CD4-positive, alpha-beta T cell (primary cell): ENCODE measurements at regions of chr3 and their contacts with region 1.

Region 1: GRCh38 chr3:119293871-119294695 is at the start of gene ARHGAP31:
- DNase-seq: peak; percentile 60 to 96 (median 78)
- ATAC-seq: peak; percentile 68
- H3K4me3 ChIP-seq: peak within 1 kb of the TSS; percentile 84
- H3K4me3 Mint-ChIP-seq: peak within 1 kb of the TSS; percentile 84
- H3K27ac ChIP-seq: peak within 1 kb of the TSS; percentile 95 to 96
- H3K27ac Mint-ChIP-seq: peak within 1 kb of the TSS; percentile 100
- H3K4me1 ChIP-seq: peaks cover 65% of the 10 kb centered on the region
- H3K4me1 Mint-ChIP-seq: peaks cover 74% of the 10 kb centered on the region
- H3K27me3 ChIP-seq: no peaks in the 10 kb centered on the region
- H3K27me3 Mint-ChIP-seq: no peaks in the 10 kb centered on the region
- CTCF ChIP-seq: no peak
- total RNA-seq, gene ARHGAP31: 2.4 to 2.9 TPM

Region 2: DNA sequence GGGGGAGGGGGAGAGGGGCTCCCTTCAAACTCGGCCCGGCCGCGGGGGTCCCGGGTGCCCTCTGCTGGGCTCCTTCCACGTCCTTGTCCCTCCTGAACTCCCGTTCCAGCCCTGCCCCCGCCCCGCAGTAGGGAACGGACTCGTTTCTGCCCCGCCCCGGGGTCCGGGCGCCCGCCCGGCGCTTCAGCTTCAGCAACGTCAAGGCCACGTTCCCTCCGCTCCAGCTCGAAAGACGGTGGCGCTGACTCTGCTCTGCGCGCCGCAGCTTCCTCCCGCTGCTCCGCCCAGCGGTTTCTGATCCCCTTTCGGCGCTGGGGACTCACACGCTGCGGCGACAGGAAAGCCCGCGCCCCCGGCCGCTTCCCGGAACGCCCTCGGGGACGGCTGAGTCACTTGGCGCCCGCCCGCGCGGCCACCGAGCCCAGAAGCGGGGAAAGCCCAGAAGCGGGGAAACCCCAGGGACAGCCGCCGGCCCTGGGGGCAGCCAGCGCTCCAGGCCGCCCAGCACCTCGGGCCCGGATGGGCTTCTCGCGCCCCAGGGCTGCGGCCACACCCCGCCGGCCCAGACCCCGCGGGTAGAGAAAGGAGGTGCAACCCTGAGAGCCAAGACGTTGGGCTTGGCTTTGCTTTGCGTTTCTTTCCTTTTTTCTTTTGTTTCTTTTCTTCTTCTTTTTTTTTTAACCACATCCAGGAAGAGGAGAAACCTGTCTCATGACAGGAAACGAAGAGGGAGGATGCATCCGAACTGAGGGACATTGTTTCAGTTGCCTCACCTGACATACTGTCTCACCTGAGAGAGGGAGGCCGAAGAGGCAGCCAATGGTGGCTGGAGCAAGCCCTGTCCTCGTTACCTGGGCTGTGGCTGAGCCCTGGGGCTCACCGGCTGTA is 29.0 kb after region 1 on chr3:
- CTCF ChIA-PET with region 1: interaction called, 3 read pairs
- POLR2A ChIA-PET with region 1: interaction called, 68 read pairs
- intact Hi-C with region 1: loop called (anchors 1 to 2 kb)
- DNase-seq: peak; percentile 70 to 97 (median 84)
- ATAC-seq: peak; percentile 86
- H3K4me3 ChIP-seq: peak overlapping the region; percentile 79
- H3K4me3 Mint-ChIP-seq: peak overlapping the region; percentile 89
- H3K27ac ChIP-seq: peak overlapping the region; percentile 81 to 90
- H3K27ac Mint-ChIP-seq: peak overlapping the region; percentile 96
- H3K4me1 ChIP-seq: peaks cover 23% of the 10 kb centered on the region
- H3K4me1 Mint-ChIP-seq: peaks cover 32% of the 10 kb centered on the region
- H3K27me3 ChIP-seq: no peaks in the 10 kb centered on the region
- H3K27me3 Mint-ChIP-seq: no peaks in the 10 kb centered on the region
- CTCF ChIP-seq: no peak

Region 3: GRCh38 chr3:119338754-119339153 is 44.7 kb after region 1 on chr3:
- CTCF ChIA-PET with region 1: no interaction called
- POLR2A ChIA-PET with region 1: interaction called, 4 read pairs
- intact Hi-C with region 1: loop called in 1 of 2 experiments (anchors 5 kb)
- DNase-seq: no peak
- ATAC-seq: no peak
- H3K4me3 ChIP-seq: no peak overlapping the region
- H3K4me3 Mint-ChIP-seq: no peak overlapping the region
- H3K27ac ChIP-seq: no peak overlapping the region
- H3K27ac Mint-ChIP-seq: no peak overlapping the region
- H3K4me1 ChIP-seq: no peaks in the 10 kb centered on the region
- H3K4me1 Mint-ChIP-seq: no peaks in the 10 kb centered on the region
- H3K27me3 ChIP-seq: no peaks in the 10 kb centered on the region
- H3K27me3 Mint-ChIP-seq: no peaks in the 10 kb centered on the region
- CTCF ChIP-seq: no peak

Region 4: DNA sequence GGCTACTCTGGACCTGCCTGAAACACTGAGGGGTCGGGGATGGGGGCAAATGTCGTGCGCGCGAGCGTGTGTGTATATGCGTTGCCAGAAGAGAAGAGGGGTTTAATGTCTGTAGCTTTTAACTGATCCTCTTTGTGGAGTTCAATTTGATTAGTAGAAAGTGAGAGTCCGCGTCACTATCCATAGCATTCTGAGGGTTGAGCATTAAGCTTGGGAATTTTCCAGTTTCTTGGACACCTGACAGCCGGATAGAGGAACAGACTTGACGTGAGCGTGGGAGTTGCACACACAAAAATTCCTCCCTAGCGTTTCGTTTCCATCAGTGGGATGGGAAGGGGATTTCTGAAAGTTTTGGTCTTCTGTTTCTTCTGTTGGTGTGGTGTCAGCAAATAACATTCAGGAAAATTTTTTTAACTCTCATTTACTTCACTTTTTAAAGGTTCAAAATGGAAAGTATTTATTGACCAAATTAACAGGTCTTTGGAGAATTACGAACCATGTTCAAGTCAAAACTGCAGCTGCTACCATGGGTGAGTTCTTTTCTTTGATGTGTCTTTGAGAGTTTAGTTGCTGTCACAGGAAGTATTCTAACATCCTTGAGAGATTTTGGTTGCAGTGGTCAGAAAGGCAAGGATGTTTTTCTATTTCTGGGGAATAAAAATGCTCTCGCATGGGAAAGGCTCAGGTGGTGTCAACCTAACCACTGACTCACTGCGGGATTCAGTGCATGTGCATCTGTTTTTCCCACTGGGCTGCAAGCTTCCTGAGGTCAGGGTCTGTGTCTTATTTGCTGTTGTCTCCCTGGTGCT is 175.5 kb after region 1 on chr3:
- CTCF ChIA-PET with region 1: interaction called, 3 read pairs
- POLR2A ChIA-PET with region 1: interaction called, 31 read pairs
- intact Hi-C with region 1: loop called (anchors 5 to 10 kb)
- DNase-seq: peak in 3 of 14 experiments; percentile 21 to 32 (median 27)
- ATAC-seq: peak; percentile 20
- H3K4me3 ChIP-seq: peak overlapping the region; percentile 86
- H3K4me3 Mint-ChIP-seq: peak overlapping the region; percentile 98
- H3K27ac ChIP-seq: peak overlapping the region; percentile 37 to 81
- H3K27ac Mint-ChIP-seq: peak overlapping the region; percentile 90
- H3K4me1 ChIP-seq: peaks cover 28% of the 10 kb centered on the region
- H3K4me1 Mint-ChIP-seq: peaks cover 29% of the 10 kb centered on the region
- H3K27me3 ChIP-seq: no peaks in the 10 kb centered on the region
- H3K27me3 Mint-ChIP-seq: no peaks in the 10 kb centered on the region
- CTCF ChIP-seq: no peak

Region 5: DNA sequence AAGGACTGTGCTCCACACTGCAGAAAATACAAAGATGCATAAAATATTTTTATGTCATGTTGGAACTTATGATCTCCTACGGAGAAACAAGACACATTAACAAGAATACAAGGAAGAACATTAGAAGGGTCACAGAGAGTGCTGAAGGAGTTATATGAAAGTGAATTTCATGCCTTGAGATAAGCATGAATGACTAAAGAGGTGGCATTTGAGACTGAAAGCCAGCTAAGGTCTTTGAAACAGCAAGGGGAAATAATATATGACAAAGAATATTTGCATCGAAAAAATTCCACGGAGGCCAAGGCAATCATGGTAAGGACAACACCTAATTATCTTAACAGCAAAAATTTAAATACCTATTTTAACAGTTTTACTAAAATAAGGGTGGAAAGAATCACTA is 787.6 kb after region 1 on chr3:
- CTCF ChIA-PET with region 1: no interaction called
- POLR2A ChIA-PET with region 1: no interaction called
- intact Hi-C with region 1: loop called in 1 of 2 experiments (anchors 10 kb)
- DNase-seq: no peak
- ATAC-seq: no peak
- H3K4me3 ChIP-seq: no peak overlapping the region
- H3K4me3 Mint-ChIP-seq: no peak overlapping the region
- H3K27ac ChIP-seq: no peak overlapping the region
- H3K27ac Mint-ChIP-seq: peak overlapping the region; percentile 21
- H3K4me1 ChIP-seq: peaks cover 25% of the 10 kb centered on the region
- H3K4me1 Mint-ChIP-seq: peaks cover 80% of the 10 kb centered on the region
- H3K27me3 ChIP-seq: no peaks in the 10 kb centered on the region
- H3K27me3 Mint-ChIP-seq: no peaks in the 10 kb centered on the region
- CTCF ChIP-seq: no peak